ENCODE measurements at regions of chr4 and their contacts with region 1.

Region 1: GRCh38 chr4:156968479-156968984 is 3.1 kb downstream of the PDGFC start:
- DNase-seq: peak; percentile 75 to 77
- ATAC-seq: peak; percentile 77
- H3K4me3 ChIP-seq: peak overlapping the region; percentile 33 to 99
- H3K27ac ChIP-seq: peak overlapping the region in 1 of 2 donors; percentile 76
- H3K4me1 ChIP-seq: peaks cover 4% of the 10 kb centered on the region in 2 donors
- H3K27me3 ChIP-seq: no peaks in the 10 kb centered on the region

Region 2: GRCh38 chr4:156378033-156378665 is 590.4 kb before region 1 on chr4:
- intact Hi-C with region 1: no loop called
- DNase-seq: no peak
- ATAC-seq: peak; percentile 52
- H3K4me3 ChIP-seq: no peak overlapping the region
- H3K27ac ChIP-seq: no peak overlapping the region
- H3K4me1 ChIP-seq: peaks cover 0 to 1% of the 10 kb centered on the region in 2 donors
- H3K27me3 ChIP-seq: no peaks in the 10 kb centered on the region

Region 3: GRCh38 chr4:156547439-156547838 is 421.1 kb before region 1 on chr4:
- intact Hi-C with region 1: loop called (anchors 5 to 10 kb)
- DNase-seq: no peak
- ATAC-seq: peak; percentile 79
- H3K4me3 ChIP-seq: no peak overlapping the region
- H3K27ac ChIP-seq: peak overlapping the region in 1 of 2 donors; percentile 93
- H3K4me1 ChIP-seq: peaks cover 1 to 25% of the 10 kb centered on the region in 2 donors
- H3K27me3 ChIP-seq: no peaks in the 10 kb centered on the region

Region 4: DNA sequence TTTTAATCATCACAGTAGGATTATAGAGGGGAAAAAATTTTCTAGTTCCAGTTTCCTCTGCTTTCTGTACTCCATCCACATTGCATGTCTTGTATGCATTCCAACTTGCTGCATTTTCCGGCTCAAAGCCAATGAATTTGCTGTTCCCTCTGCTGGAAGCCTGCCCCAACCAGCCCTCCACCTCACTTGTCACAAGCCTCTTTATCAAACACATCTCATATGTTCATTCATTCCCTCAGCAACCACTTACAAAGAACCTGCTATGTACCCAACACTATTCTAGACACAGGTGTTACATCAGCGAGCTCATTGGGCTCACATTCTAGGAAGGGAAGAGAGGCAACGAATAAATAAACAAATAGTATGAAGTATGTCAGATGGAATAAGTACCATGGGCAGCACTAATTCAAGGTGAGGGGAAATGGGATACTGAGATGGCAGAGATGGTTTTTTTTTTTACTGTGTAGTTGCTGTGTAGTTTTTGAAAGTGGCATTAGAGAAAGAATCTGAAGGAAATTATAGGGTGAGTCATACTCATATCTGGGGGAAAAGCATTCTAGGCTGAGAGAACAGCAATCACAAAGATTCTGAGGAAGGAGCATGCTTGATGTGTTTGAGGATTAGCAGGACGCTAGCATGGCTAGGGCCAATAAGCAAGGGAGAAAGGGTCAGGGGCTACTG is 329.5 kb before region 1 on chr4:
- intact Hi-C with region 1: loop called in 1 of 2 experiments (anchors 10 kb)
- DNase-seq: peak in 1 of 2 donors; percentile 38
- ATAC-seq: no peak
- H3K4me3 ChIP-seq: peak overlapping the region in 1 of 2 donors; percentile 33
- H3K27ac ChIP-seq: peak overlapping the region in 1 of 2 donors; percentile 81
- H3K4me1 ChIP-seq: peaks cover 3% of the 10 kb centered on the region in 2 donors
- H3K27me3 ChIP-seq: no peaks in the 10 kb centered on the region

Region 5: GRCh38 chr4:156829201-156829873 is 139.2 kb before region 1 on chr4:
- intact Hi-C with region 1: loop called in 1 of 2 experiments (anchors 5 kb)
- DNase-seq: peak in 1 of 2 donors; percentile 56
- ATAC-seq: peak; percentile 82
- H3K4me3 ChIP-seq: no peak overlapping the region
- H3K27ac ChIP-seq: no peak overlapping the region
- H3K4me1 ChIP-seq: no peaks in the 10 kb centered on the region
- H3K27me3 ChIP-seq: no peaks in the 10 kb centered on the region

Region 6: GRCh38 chr4:156992943-156993342 is 24.4 kb after region 1 on chr4:
- intact Hi-C with region 1: no loop called
- DNase-seq: no peak
- ATAC-seq: no peak
- H3K4me3 ChIP-seq: no peak overlapping the region
- H3K27ac ChIP-seq: no peak overlapping the region
- H3K4me1 ChIP-seq: no peaks in the 10 kb centered on the region
- H3K27me3 ChIP-seq: no peaks in the 10 kb centered on the region

Region 7: DNA sequence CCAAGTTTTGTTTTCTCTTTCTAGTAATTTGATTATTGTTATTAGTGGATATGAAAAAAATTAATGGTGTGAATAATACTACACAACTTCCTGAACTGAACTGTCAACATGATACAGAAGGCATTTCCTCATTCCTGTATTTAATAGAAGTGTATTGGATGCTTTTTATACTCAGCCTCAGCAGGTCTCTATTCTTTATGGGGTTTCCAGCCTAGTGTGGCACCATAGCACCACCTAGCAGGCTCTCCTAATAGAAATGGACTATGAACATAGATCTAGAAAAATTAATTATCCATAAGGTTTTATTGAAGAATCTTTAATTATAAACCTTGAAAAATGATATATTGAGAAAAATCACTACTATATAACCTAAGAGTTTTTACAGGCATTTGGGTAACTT is 159.9 kb after region 1 on chr4:
- intact Hi-C with region 1: loop called in 1 of 2 experiments (anchors 10 kb)
- DNase-seq: no peak
- ATAC-seq: no peak
- H3K4me3 ChIP-seq: no peak overlapping the region
- H3K27ac ChIP-seq: no peak overlapping the region
- H3K4me1 ChIP-seq: no peaks in the 10 kb centered on the region
- H3K27me3 ChIP-seq: no peaks in the 10 kb centered on the region